GM12878 (cell line): ENCODE measurements at regions of chr1 and their contacts with region 1.

Region 1: GRCh38 chr1:186985889-186986491 is 157.2 kb downstream of the PLA2G4A start:
- DNase-seq: no peak
- ATAC-seq: peak; percentile 83
- H3K4me3 ChIP-seq: no peak overlapping the region
- H3K27ac ChIP-seq: no peak overlapping the region
- H3K4me1 ChIP-seq: no peaks in the 10 kb centered on the region
- H3K27me3 ChIP-seq: no peaks in the 10 kb centered on the region
- CTCF ChIP-seq: peak; percentile 43 to 83 (median 68); a peak in 5 of 6 replicates
- EP300 ChIP-seq: no peak
- POLR2A ChIP-seq: no peak
- RAD21 ChIP-seq: peak; percentile 97

Region 2: DNA sequence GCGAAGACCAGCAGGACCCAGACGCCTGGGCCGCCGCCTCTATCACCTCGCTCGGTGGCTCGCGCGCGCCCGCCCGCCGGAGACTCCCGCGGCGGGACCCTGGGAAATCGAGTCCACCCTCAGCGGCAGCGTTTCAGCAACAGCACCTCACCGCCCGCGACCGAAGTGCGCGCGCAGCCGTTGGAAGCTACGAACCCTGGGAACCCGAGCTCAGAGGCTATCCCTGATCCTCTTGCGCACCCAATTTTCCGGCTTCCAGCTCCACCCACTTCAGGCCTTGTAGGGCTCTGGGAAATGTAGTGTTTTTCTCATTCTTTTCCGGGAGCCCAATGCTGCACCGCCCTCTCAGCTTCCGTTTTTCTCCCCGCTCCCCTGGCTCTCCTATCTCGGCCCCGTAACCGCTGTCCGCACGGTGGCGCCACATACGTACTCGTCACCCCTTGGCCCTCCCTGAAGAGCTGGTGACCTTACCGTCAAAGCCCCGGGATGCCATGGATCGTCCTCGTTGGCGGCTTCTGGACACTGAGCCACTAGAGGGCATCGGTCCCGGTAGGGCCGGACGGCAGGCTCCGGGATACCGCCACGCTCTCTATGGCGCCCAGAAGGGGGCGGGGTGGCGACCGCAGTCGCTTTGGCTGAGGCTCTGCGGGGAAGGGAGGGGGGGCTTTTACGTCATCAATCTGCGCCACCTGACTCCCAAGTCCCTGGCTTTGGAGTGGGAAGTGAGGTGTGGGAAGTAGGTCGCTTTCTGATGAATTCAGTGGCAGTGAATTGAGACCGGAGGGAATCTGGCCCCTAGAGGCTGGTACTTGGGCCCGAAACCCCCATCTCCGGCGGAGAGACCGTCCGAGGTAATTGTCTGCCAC is 610.7 kb before region 1 on chr1 and contains the starts of genes ODR4 and TPR:
- CTCF ChIA-PET with region 1: interaction called, 5 read pairs
- POLR2A ChIA-PET with region 1: no interaction called
- RAD21 ChIA-PET with region 1: interaction called, 5 read pairs
- SMC1A ChIA-PET with region 1: interaction called, 3 read pairs
- in situ Hi-C with region 1: no loop called
- intact Hi-C with region 1: loop called (anchors 1 kb)
- DNase-seq: peak; percentile 96
- ATAC-seq: peak; percentile 92
- H3K4me3 ChIP-seq: peak within 1 kb of the TSS; percentile 83
- H3K27ac ChIP-seq: peak within 1 kb of the TSS; percentile 93
- H3K4me1 ChIP-seq: no peaks in the 10 kb centered on the region; the same call in 1 of the 2 replicates
- H3K27me3 ChIP-seq: no peaks in the 10 kb centered on the region
- CTCF ChIP-seq: peak; percentile 83 to 99 (median 98)
- EP300 ChIP-seq: 0 out of 4 replicates have a peak, but pooled peaks have one; percentile 11 to 35
- POLR2A ChIP-seq: peak; percentile 81
- RAD21 ChIP-seq: peak; percentile 48
- polyA plus RNA-seq, gene ODR4: 12.6 to 15.4 TPM
- polyA plus RNA-seq, gene TPR: 30.9 to 37.2 TPM

Region 3: DNA sequence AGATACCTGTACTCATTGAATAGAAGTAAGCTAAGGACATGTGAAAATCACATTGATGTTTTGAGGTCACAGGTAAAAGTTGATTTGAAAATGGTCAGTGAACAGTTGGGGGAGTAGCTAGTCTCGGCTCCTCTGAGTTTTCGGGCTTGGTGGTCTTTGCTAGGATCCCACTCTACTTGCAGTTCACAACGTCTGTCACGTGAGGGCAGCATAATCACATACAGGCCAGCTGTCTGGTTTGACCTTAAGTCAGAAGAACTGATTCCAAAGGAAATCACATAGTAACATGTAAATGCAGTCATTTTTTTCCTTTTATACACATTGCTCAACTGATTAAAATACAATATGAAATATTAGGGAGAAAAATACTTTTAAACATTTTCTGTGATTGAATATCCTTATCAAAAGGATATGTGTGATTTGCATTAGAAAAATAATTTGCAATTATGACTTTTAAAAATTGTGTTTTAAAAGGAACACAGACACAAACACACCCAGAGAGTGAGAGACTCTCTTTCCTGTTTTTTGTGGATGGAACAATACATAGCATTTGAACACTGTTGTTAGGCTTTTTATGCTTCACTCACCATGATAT is 503.2 kb before region 1 on chr1:
- CTCF ChIA-PET with region 1: interaction called, 10 read pairs
- POLR2A ChIA-PET with region 1: no interaction called
- RAD21 ChIA-PET with region 1: interaction called, 8 read pairs
- SMC1A ChIA-PET with region 1: interaction called, 12 read pairs
- in situ Hi-C with region 1: loop called (anchors 5 kb)
- intact Hi-C with region 1: loop called (anchors 1 kb)
- DNase-seq: peak; percentile 31
- ATAC-seq: peak; percentile 86
- H3K4me3 ChIP-seq: no peak overlapping the region
- H3K27ac ChIP-seq: no peak overlapping the region
- H3K4me1 ChIP-seq: no peaks in the 10 kb centered on the region
- H3K27me3 ChIP-seq: no peaks in the 10 kb centered on the region
- CTCF ChIP-seq: peak; percentile 90 to 96 (median 94)
- EP300 ChIP-seq: no peak
- POLR2A ChIP-seq: no peak
- RAD21 ChIP-seq: peak; percentile 100

Region 4: DNA sequence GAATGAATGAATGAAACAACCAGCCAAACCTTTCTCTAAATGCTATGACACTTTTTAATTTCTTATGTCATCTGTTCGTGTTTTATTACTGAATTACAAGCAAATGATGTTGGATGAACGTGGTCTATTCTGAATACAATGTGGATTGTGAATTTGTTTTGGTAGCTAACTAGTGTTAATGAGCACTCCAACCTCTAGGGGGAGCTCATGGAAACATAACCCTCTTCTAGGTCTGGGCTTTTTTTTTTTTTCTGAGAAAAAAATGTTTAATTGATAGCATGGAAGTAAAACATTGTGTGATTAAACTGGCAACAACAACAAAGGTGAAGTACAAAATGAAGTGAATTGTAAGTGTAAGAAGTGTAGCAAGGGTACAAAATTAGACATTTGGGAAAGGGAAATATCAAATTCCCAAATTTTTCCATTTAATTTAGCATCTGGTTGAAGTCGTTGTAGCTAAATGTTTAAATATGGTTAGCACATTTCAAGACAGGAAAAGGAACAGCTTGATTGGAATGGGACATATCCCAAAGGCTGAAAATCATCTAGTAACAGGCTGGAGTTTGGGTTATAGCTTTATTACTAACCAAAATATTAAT is 263.2 kb before region 1 on chr1:
- CTCF ChIA-PET with region 1: interaction called, 14 read pairs
- POLR2A ChIA-PET with region 1: no interaction called
- RAD21 ChIA-PET with region 1: interaction called, 6 read pairs
- SMC1A ChIA-PET with region 1: no interaction called
- in situ Hi-C with region 1: loop called (anchors 10 kb)
- intact Hi-C with region 1: loop called (anchors 2 kb)
- DNase-seq: no peak
- ATAC-seq: peak; percentile 76
- H3K4me3 ChIP-seq: no peak overlapping the region
- H3K27ac ChIP-seq: no peak overlapping the region
- H3K4me1 ChIP-seq: no peaks in the 10 kb centered on the region
- H3K27me3 ChIP-seq: no peaks in the 10 kb centered on the region
- CTCF ChIP-seq: peak; percentile 48 to 73 (median 56)
- EP300 ChIP-seq: no peak
- POLR2A ChIP-seq: no peak
- RAD21 ChIP-seq: peak; percentile 80